BJ (cell line): ENCODE measurements at regions of chr10 and their contacts with region 1.

Region 1: GRCh38 chr10:119112056-119112455 is 8.1 kb downstream of the DENND10 start:
- DNase-seq: peak; percentile 49
- H3K4me3 ChIP-seq: no peak overlapping the region
- H3K27me3 ChIP-seq: no peaks in the 10 kb centered on the region
- CTCF ChIP-seq: no peak

Region 2: DNA sequence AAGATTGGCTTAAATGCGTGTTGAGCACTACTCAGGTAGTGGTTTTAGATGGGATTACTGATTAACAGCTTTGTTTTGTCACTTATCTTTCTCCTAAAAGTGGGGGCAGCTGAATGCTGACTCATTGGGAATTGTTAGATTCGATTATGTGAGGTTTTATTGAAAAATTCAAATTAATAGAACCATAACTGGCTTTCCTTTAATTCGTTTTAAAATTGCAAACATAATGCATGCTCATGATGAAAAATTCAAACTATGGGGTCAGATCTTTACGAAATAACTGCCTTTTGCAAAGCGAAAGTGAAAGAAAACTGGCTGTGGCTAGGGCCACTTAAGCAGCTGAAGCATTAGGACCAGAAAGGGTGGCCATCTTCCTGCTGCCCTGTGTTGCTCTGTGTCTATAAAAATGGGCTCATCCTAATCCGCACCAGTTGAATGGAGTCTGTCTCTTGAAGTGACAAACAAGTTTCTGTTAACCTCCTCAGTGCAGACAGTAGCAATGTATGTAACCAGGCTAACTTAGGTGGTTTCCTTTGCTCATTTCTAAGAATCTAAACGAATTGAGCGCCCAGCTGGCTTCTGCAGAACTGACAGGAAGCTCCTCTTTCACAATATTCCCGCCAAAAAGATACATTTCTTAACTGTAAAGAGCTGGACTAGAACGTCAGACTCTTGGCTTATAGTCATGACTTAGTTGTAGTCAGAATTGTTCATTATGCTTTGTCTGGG is 19.6 kb after region 1 on chr10:
- CTCF ChIA-PET with region 1: no interaction called
- POLR2A ChIA-PET with region 1: interaction called, 10 read pairs
- DNase-seq: no peak
- H3K4me3 ChIP-seq: no peak overlapping the region
- H3K27me3 ChIP-seq: no peaks in the 10 kb centered on the region
- CTCF ChIP-seq: no peak

Region 3: DNA sequence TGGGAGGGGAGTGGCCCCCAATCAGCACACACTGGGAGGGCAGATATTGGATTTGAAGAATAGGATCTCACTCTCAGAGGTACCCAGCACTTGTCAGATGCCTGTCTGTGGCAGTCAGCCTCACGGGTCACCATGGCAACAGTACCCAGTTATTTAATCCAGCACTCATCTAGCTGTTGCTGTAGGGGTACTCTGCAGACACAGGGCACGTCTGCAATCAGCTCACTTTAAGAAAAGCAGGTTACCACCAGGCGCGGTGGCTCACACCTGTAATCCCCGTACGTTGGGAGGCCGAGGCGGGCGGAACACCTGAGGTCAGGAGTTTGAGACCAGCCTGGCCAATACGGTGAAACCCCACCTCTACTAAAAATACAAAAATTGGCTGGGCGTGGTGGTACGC is 41.6 kb after region 1 on chr10:
- CTCF ChIA-PET with region 1: no interaction called
- POLR2A ChIA-PET with region 1: no interaction called
- DNase-seq: no peak
- H3K4me3 ChIP-seq: no peak overlapping the region
- H3K27me3 ChIP-seq: no peaks in the 10 kb centered on the region
- CTCF ChIP-seq: no peak